GM12878 (cell line): ENCODE measurements at regions of chr15 and their contacts with region 1.

Region 1: GRCh38 chr15:74873036-74873755 is at the start of gene SCAMP2:
- DNase-seq: peak; percentile 85
- ATAC-seq: peak; percentile 92
- H3K4me3 ChIP-seq: peak within 1 kb of the TSS; percentile 93
- H3K27ac ChIP-seq: peak within 1 kb of the TSS; percentile 94
- H3K4me1 ChIP-seq: peaks cover 28% of the 10 kb centered on the region
- H3K27me3 ChIP-seq: no peaks in the 10 kb centered on the region
- CTCF ChIP-seq: no peak
- EP300 ChIP-seq: no peak
- POLR2A ChIP-seq: peak; percentile 95
- RAD21 ChIP-seq: no peak
- polyA plus RNA-seq, gene SCAMP2: 10.9 to 22.5 TPM

Region 2: DNA sequence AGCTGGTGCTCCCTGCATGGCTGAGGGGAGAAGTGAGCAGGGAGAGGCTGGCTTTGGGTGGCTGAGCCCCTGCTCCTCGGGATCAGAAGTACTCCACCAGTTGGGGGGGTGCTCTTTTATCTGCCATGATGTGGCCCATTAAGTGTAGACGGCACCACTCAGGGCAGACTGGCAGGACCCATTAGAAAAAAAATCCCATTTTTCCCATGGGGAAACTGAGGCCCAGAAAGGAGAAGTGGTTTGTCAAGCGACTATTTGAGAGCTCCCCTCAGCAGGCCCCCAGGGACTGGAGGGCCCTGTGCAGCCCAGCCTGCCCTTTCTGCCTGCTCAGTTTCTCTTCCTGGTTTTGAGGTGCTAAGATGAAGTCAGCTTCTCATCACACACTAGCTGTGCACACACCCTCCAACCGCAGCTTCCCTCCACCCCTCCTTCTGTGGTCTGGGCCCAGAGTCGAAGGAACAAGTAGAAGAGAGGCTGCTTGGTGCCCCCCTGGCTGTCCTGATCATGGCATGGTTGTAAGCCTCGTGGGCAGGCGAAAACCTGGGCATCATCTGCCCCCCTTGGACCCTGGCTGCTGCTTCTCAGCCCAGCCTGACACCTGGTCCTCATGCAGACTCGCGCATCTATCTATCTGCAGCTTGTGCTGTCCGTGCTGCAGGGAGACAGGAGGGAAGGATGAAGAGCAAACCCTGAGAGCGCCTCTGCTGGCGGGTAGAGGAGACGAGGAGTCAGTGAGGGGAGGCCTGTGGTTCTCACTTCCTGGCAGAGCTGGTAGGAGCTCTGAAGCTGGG is 85.8 kb before region 1 on chr15:
- CTCF ChIA-PET with region 1: interaction called, 5 read pairs
- POLR2A ChIA-PET with region 1: interaction called, 13 read pairs
- RAD21 ChIA-PET with region 1: interaction called, 27 read pairs
- SMC1A ChIA-PET with region 1: interaction called, 23 read pairs
- in situ Hi-C with region 1: no loop called
- intact Hi-C with region 1: no loop called
- DNase-seq: peak; percentile 97
- ATAC-seq: peak; percentile 58
- H3K4me3 ChIP-seq: peak overlapping the region; percentile 94
- H3K27ac ChIP-seq: peak overlapping the region; percentile 96
- H3K4me1 ChIP-seq: peaks cover 55% of the 10 kb centered on the region
- H3K27me3 ChIP-seq: no peaks in the 10 kb centered on the region
- CTCF ChIP-seq: peak; percentile 79 to 93 (median 82)
- EP300 ChIP-seq: peak; percentile 83 to 88
- POLR2A ChIP-seq: peak; percentile 76
- RAD21 ChIP-seq: peak; percentile 45; the same call in 1 of the 2 replicates

Region 3: GRCh38 chr15:74857082-74857655 is 16.0 kb before region 1 on chr15:
- CTCF ChIA-PET with region 1: interaction called, 47 read pairs
- POLR2A ChIA-PET with region 1: interaction called, 80 read pairs
- RAD21 ChIA-PET with region 1: interaction called, 57 read pairs
- SMC1A ChIA-PET with region 1: interaction called, 120 read pairs
- in situ Hi-C with region 1: no loop called
- intact Hi-C with region 1: loop called (anchors 2 kb)
- DNase-seq: peak; percentile 78
- ATAC-seq: peak; percentile 91
- H3K4me3 ChIP-seq: peak overlapping the region; percentile 35; the same call in 1 of the 2 replicates
- H3K27ac ChIP-seq: peak overlapping the region; percentile 80
- H3K4me1 ChIP-seq: peaks cover 46% of the 10 kb centered on the region
- H3K27me3 ChIP-seq: no peaks in the 10 kb centered on the region
- CTCF ChIP-seq: no peak
- EP300 ChIP-seq: no peak
- POLR2A ChIP-seq: peak; percentile 35
- RAD21 ChIP-seq: no peak

Region 4: GRCh38 chr15:74889883-74890664 is 16.9 kb after region 1 on chr15 and contains the start of gene MPI:
- CTCF ChIA-PET with region 1: interaction called, 4 read pairs
- POLR2A ChIA-PET with region 1: interaction called, 32 read pairs
- RAD21 ChIA-PET with region 1: interaction called, 4 read pairs
- SMC1A ChIA-PET with region 1: interaction called, 65 read pairs
- in situ Hi-C with region 1: no loop called
- intact Hi-C with region 1: no loop called
- DNase-seq: no peak
- ATAC-seq: peak; percentile 99
- H3K4me3 ChIP-seq: peak within 1 kb of the TSS; percentile 83
- H3K27ac ChIP-seq: peak within 1 kb of the TSS; percentile 66
- H3K4me1 ChIP-seq: peaks cover 25% of the 10 kb centered on the region
- H3K27me3 ChIP-seq: no peaks in the 10 kb centered on the region
- CTCF ChIP-seq: no peak
- EP300 ChIP-seq: no peak
- POLR2A ChIP-seq: peak; percentile 99
- RAD21 ChIP-seq: no peak
- polyA plus RNA-seq, gene MPI: 38.3 to 43.6 TPM

Region 5: DNA sequence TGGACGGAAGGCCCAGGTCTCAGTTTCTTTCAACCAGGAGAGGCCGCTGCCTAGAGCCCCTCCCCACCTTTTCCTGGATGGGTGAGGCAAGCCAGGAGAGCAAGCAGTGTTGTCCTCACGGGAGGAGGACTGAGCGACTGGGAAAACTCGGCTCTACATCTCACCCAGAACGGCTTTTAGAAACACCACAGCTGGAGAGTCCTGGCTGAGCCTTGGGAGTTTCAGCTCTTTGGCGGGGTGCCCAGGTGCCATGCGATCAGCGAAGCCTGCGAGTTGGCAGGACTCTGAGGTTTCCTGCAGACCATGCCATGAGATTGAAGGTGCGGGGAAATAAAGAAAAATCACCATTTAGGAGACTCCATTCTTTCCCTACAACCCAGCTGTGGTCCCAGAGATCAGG is 176.2 kb after region 1 on chr15:
- CTCF ChIA-PET with region 1: no interaction called
- POLR2A ChIA-PET with region 1: no interaction called
- RAD21 ChIA-PET with region 1: no interaction called
- SMC1A ChIA-PET with region 1: no interaction called
- in situ Hi-C with region 1: no loop called
- intact Hi-C with region 1: no loop called
- DNase-seq: no peak
- ATAC-seq: no peak
- H3K4me3 ChIP-seq: no peak overlapping the region
- H3K27ac ChIP-seq: peak overlapping the region; percentile 100; the same call in 1 of the 2 replicates
- H3K4me1 ChIP-seq: peaks cover 46% of the 10 kb centered on the region
- H3K27me3 ChIP-seq: no peaks in the 10 kb centered on the region
- CTCF ChIP-seq: no peak
- EP300 ChIP-seq: no peak
- POLR2A ChIP-seq: peak; percentile 25; the same call in 1 of the 2 replicates
- RAD21 ChIP-seq: no peak